A549 (cell line): ENCODE measurements at regions of chr5 and their contacts with region 1.

Region 1: DNA sequence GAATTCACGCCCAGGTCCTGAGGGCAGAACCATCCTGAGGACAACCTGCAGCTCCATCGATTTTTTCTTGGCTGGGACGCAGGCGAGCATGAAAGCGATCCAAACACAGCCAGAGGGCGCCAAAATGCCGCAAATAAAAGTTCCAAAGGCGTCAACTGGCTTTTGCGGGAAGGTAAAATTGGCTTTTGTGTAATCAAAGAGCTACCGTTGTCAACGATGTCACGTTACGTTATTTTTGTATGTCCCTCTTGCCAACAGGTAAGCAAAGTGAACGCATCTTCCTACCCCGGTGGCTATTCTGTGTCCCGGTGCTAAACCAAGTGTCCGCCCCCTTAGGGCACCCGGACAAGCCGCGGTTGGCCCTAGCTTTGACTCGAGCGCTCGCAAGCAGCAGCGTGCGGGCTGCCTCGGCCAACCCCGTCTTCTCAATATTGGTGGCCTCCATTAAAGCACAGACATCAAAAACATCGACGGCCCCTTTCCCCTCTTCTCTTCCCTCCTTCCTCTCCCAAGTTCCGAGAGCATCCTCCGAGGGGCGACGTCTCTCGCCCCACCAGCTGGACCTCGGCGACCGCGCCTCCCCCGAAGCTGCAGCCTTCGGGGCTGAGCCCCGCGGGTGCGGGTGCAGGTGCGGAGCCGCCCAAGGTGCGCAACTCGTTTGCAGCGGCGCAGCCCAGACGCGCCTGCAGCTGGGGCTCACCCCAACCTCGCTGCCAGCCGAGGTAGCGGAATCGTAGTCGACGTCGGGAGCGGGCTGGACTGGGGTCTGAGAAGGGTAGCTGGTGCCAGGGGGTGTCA is 1.1 kb upstream of the BASP1 start:
- DNase-seq: peak; percentile 73 to 92
- ATAC-seq: peak; percentile 62 to 79
- H3K4me3 ChIP-seq: peak overlapping the region; percentile 95
- H3K27ac ChIP-seq: peak overlapping the region; percentile 98
- H3K4me1 ChIP-seq: peaks cover 43% of the 10 kb centered on the region
- CTCF ChIP-seq: peak; percentile 88
- EP300 ChIP-seq: peak in 1 of 2 experiments; percentile 24; a peak in 1 of 5 replicates
- POLR2A ChIP-seq: peak; percentile 28; the same call in 1 of the 2 replicates
- RAD21 ChIP-seq: peak; percentile 97 to 98

Region 2: DNA sequence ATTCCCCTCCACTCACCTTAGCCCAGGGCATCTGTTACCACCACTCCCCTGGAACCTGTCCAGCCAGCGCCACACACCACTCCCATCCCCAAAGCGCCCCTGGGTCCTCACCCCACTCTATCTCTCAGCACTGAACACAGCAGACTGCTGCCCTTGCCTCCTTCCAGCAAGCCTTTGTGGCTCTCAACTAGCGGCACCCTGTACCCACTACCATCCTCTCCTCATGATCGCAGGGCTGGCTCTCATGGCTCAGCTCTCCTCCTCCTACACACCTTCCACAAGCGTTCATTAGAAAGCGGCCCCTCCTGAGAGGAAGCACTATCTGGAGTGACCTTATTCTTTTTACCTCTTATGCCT is 12.3 kb before region 1 on chr5:
- CTCF ChIA-PET with region 1: interaction called, 37 read pairs
- POLR2A ChIA-PET with region 1: no interaction called
- DNase-seq: no peak
- ATAC-seq: peak; percentile 54 to 64
- H3K4me3 ChIP-seq: no peak overlapping the region
- H3K27ac ChIP-seq: no peak overlapping the region
- H3K4me1 ChIP-seq: peaks cover 17% of the 10 kb centered on the region
- CTCF ChIP-seq: no peak
- EP300 ChIP-seq: no peak
- POLR2A ChIP-seq: no peak
- RAD21 ChIP-seq: no peak

Region 3: GRCh38 chr5:17252498-17252897 is 36.1 kb after region 1 on chr5:
- CTCF ChIA-PET with region 1: interaction called, 15 read pairs
- POLR2A ChIA-PET with region 1: interaction called, 5 read pairs
- DNase-seq: no peak
- ATAC-seq: no peak
- H3K4me3 ChIP-seq: no peak overlapping the region
- H3K27ac ChIP-seq: peak overlapping the region; percentile 61 to 79
- H3K4me1 ChIP-seq: peaks cover 98% of the 10 kb centered on the region
- CTCF ChIP-seq: no peak
- EP300 ChIP-seq: no peak
- POLR2A ChIP-seq: no peak
- RAD21 ChIP-seq: no peak

Region 4: DNA sequence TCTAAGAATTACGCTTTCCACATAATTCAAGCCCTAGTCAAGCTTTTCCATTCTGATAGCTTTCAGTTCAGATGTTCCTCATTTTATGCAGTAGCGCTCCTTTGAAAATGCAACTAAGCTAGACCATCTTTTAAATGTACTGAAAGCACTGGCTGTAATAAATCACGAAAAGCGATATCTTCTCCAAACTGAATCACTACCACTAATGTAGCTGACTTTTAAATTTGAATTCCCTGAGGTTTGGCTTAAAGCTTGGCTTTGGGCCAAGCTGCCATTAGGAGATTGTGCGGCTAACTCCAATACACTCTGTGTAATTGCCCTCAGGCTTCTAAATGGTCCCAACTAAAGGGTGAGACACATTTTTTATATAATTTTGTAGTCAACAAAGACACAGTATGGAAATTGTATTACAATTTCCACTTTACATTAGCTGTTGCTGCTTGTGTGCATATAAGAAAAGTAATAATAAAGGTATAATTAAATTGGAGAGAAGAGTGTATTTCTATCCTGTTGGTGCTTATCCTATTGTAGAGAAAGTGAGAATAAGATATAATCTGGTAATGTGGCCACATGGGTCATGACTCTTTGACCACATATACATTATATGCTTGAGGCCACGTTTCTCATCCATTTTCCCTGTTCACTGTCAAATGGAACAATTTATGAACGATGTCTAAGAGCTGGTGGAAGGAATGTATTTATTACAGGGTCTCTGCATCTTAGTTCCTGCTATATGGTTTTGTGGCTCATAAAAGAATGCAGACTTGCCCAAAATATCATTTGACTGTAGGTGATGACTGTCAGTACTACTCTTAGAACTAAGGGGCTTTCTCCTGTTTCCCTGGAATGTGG is 163.0 kb after region 1 on chr5:
- CTCF ChIA-PET with region 1: interaction called, 14 read pairs
- POLR2A ChIA-PET with region 1: no interaction called
- DNase-seq: no peak
- ATAC-seq: no peak
- H3K4me3 ChIP-seq: no peak overlapping the region
- H3K27ac ChIP-seq: peak overlapping the region; percentile 93 to 94
- H3K4me1 ChIP-seq: peaks cover 52% of the 10 kb centered on the region
- CTCF ChIP-seq: no peak
- EP300 ChIP-seq: no peak
- POLR2A ChIP-seq: no peak
- RAD21 ChIP-seq: no peak; a peak in 1 of 5 replicates

Region 5: DNA sequence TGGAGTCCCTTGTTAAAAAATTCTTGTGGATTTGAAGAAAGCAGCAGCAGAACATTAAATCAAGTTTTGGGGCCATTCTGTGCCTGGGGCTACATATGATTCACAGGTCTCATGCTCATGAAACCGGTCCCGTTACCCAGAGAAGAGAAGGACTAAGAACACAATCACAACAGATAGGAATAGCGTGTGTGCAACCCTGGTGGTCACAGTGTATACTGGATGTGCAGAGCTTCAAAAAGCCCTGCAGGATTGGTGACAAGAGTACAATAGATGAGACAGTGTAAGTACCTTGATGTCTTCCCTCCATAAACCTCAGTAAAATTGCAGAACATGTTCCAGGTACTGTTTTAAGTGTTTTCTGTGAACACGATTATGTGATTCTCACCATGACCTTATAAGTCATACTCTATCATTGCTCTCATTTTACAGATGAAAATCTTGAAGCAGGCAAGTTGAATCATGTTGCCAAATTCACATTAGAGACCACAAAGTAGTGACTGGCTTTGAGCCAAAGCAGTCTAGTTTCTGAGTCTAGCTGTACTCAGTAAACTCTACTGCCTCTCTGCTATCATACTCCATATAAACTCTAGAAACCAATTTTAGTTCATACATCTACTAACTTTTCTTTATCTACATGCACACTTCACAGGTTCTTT is 1054.4 kb after region 1 on chr5:
- CTCF ChIA-PET with region 1: interaction called, 17 read pairs
- POLR2A ChIA-PET with region 1: interaction called, 3 read pairs
- DNase-seq: no peak
- ATAC-seq: no peak
- H3K4me3 ChIP-seq: no peak overlapping the region
- H3K27ac ChIP-seq: no peak overlapping the region
- H3K4me1 ChIP-seq: no peaks in the 10 kb centered on the region
- CTCF ChIP-seq: no peak
- EP300 ChIP-seq: no peak
- POLR2A ChIP-seq: no peak
- RAD21 ChIP-seq: no peak

Region 6: GRCh38 chr5:18305297-18305924 is 1089.0 kb after region 1 on chr5:
- CTCF ChIA-PET with region 1: interaction called, 125 read pairs
- POLR2A ChIA-PET with region 1: no interaction called
- DNase-seq: peak; percentile 49 to 71
- ATAC-seq: peak; percentile 80 to 87
- H3K4me3 ChIP-seq: 0 out of 3 replicates have a peak overlapping the region, but pooled peaks have one; percentile 7
- H3K27ac ChIP-seq: peak overlapping the region in 1 of 2 experiments; percentile 30; a peak in 1 of 6 replicates
- H3K4me1 ChIP-seq: no peaks in the 10 kb centered on the region
- CTCF ChIP-seq: peak; percentile 81
- EP300 ChIP-seq: no peak
- POLR2A ChIP-seq: no peak
- RAD21 ChIP-seq: peak; percentile 93 to 98